Transverse colon (tissue), 4 donors: ENCODE measurements at regions of chr6 and their contacts with region 1.

Region 1: GRCh38 chr6:2952557-2953095 is 18.7 kb downstream of the SERPINB6 start:
- DNase-seq: peak; percentile 87
- H3K4me3 ChIP-seq: no peak overlapping the region
- H3K27ac ChIP-seq: peak overlapping the region; percentile 75 to 81 (median 76)
- H3K4me1 ChIP-seq: peaks cover 0 to 23% (median 10%) of the 10 kb centered on the region in 4 donors
- H3K27me3 ChIP-seq: no peaks in the 10 kb centered on the region
- CTCF ChIP-seq: peak; percentile 95 to 100 (median 99)
- EP300 ChIP-seq: no peak
- POLR2A ChIP-seq: no peak

Region 2: DNA sequence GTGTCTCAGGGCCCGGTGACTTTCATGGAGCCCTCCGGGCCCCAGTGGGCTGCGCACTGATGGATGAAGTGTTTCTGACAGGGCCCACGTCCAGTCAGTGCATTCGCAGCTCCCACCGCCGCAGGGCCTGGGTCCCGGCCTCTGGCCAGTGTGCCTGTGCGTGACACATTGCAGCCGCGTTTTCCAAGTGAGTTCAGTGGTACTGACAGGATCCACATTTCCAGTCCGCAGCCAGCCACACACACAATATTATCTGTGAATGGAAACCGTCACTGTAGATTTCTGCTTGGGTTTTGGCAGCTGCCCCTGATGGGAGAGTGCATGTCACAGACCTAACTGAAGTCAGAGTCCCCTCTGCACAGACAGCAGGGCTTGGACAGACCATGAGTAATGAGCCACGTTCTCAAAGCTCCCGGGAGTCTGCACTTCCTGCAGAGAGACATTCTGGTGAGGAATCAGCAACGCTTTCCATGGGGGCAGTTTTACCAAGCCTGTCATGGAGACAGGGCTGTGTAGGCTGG is 373.3 kb before region 1 on chr6:
- in situ Hi-C with region 1: no loop called
- intact Hi-C with region 1: no loop called
- DNase-seq: no peak
- H3K4me3 ChIP-seq: no peak overlapping the region
- H3K27ac ChIP-seq: no peak overlapping the region
- H3K4me1 ChIP-seq: no peaks in the 10 kb centered on the region
- H3K27me3 ChIP-seq: peaks cover 8% of the 10 kb centered on the region
- CTCF ChIP-seq: no peak
- EP300 ChIP-seq: no peak
- POLR2A ChIP-seq: no peak

Region 3: GRCh38 chr6:2988426-2989331 is 36.1 kb after region 1 on chr6:
- in situ Hi-C with region 1: no loop called
- intact Hi-C with region 1: loop called (anchors 5 kb)
- DNase-seq: peak; percentile 90
- H3K4me3 ChIP-seq: peak overlapping the region; percentile 63 to 88 (median 72)
- H3K27ac ChIP-seq: peak overlapping the region; percentile 97 to 99 (median 98)
- H3K4me1 ChIP-seq: peaks cover 17 to 50% (median 35%) of the 10 kb centered on the region in 4 donors
- H3K27me3 ChIP-seq: no peaks in the 10 kb centered on the region
- CTCF ChIP-seq: peak; percentile 82 to 98 (median 92)
- EP300 ChIP-seq: no peak
- POLR2A ChIP-seq: peak; percentile 73

Region 4: DNA sequence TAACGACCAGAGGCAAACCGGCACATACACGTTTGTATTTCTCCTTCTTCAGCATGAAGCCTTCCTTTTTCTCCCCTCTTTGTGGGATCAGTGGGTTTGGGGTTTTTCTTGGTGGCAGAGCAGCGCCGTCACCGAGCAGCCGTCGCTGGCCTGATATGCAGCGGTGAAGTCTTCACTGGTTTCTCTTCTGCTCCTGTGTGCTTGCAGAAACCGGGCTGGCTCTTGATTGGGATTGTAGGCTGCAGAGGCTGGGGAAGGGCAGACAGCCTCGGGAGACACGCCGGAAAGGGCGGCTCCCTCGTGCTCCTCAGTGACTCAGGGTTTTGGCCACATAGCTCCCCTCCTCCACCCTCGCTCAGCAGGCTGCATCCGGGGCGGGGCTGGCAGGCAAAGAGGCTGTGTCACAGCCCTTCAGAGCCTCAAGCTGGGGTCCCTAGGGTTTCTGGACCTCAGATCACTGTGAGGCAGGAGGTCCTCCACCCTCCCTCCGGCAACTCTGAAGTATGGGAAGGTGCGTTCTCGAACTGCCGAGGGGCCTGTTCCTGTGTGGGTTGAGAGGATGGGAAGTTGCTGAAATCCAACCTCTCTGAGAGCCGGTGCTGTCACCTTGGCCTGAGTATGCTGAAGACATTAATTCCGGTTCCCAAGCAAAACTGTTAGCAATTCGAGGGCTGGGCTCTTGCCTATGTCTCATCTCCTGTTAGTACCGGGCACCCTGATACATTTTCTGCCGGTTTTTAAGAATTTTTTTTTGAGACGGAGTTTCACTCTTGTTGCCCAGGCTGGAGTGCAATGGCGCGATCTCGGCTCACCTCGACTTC is 71.2 kb after region 1 on chr6:
- in situ Hi-C with region 1: no loop called
- intact Hi-C with region 1: no loop called
- DNase-seq: peak; percentile 93
- H3K4me3 ChIP-seq: peak overlapping the region; percentile 11 to 47 (median 30)
- H3K27ac ChIP-seq: peak overlapping the region; percentile 82 to 90 (median 86)
- H3K4me1 ChIP-seq: peaks cover 9 to 59% (median 19%) of the 10 kb centered on the region in 4 donors
- H3K27me3 ChIP-seq: no peaks in the 10 kb centered on the region
- CTCF ChIP-seq: no peak
- EP300 ChIP-seq: peak; percentile 40
- POLR2A ChIP-seq: peak; percentile 63